GM12878 (cell line): ENCODE measurements at regions of chr4 and their contacts with region 1.

Region 1: GRCh38 chr4:48002267-48002666 is 14.2 kb downstream of the CNGA1 start:
- DNase-seq: no peak
- ATAC-seq: no peak
- H3K4me3 ChIP-seq: no peak overlapping the region
- H3K27ac ChIP-seq: no peak overlapping the region
- H3K4me1 ChIP-seq: no peaks in the 10 kb centered on the region
- H3K27me3 ChIP-seq: no peaks in the 10 kb centered on the region
- CTCF ChIP-seq: no peak
- EP300 ChIP-seq: no peak
- POLR2A ChIP-seq: no peak
- RAD21 ChIP-seq: no peak

Region 2: GRCh38 chr4:47674144-47674543 is 328.1 kb before region 1 on chr4:
- CTCF ChIA-PET with region 1: no interaction called
- POLR2A ChIA-PET with region 1: no interaction called
- RAD21 ChIA-PET with region 1: no interaction called
- SMC1A ChIA-PET with region 1: no interaction called
- in situ Hi-C with region 1: no loop called
- intact Hi-C with region 1: no loop called
- DNase-seq: no peak
- ATAC-seq: no peak
- H3K4me3 ChIP-seq: no peak overlapping the region
- H3K27ac ChIP-seq: no peak overlapping the region
- H3K4me1 ChIP-seq: no peaks in the 10 kb centered on the region
- H3K27me3 ChIP-seq: peaks cover 0 to 3% of the 10 kb centered on the region in 2 experiments; a peak in 2 of 4 replicates
- CTCF ChIP-seq: no peak
- EP300 ChIP-seq: no peak
- POLR2A ChIP-seq: no peak
- RAD21 ChIP-seq: no peak

Region 3: GRCh38 chr4:47891928-47892327 is 110.3 kb before region 1 on chr4:
- CTCF ChIA-PET with region 1: no interaction called
- POLR2A ChIA-PET with region 1: no interaction called
- RAD21 ChIA-PET with region 1: no interaction called
- SMC1A ChIA-PET with region 1: no interaction called
- in situ Hi-C with region 1: no loop called
- intact Hi-C with region 1: no loop called
- DNase-seq: no peak
- ATAC-seq: no peak
- H3K4me3 ChIP-seq: no peak overlapping the region
- H3K27ac ChIP-seq: no peak overlapping the region
- H3K4me1 ChIP-seq: no peaks in the 10 kb centered on the region
- H3K27me3 ChIP-seq: no peaks in the 10 kb centered on the region
- CTCF ChIP-seq: no peak
- EP300 ChIP-seq: no peak
- POLR2A ChIP-seq: no peak
- RAD21 ChIP-seq: no peak

Region 4: DNA sequence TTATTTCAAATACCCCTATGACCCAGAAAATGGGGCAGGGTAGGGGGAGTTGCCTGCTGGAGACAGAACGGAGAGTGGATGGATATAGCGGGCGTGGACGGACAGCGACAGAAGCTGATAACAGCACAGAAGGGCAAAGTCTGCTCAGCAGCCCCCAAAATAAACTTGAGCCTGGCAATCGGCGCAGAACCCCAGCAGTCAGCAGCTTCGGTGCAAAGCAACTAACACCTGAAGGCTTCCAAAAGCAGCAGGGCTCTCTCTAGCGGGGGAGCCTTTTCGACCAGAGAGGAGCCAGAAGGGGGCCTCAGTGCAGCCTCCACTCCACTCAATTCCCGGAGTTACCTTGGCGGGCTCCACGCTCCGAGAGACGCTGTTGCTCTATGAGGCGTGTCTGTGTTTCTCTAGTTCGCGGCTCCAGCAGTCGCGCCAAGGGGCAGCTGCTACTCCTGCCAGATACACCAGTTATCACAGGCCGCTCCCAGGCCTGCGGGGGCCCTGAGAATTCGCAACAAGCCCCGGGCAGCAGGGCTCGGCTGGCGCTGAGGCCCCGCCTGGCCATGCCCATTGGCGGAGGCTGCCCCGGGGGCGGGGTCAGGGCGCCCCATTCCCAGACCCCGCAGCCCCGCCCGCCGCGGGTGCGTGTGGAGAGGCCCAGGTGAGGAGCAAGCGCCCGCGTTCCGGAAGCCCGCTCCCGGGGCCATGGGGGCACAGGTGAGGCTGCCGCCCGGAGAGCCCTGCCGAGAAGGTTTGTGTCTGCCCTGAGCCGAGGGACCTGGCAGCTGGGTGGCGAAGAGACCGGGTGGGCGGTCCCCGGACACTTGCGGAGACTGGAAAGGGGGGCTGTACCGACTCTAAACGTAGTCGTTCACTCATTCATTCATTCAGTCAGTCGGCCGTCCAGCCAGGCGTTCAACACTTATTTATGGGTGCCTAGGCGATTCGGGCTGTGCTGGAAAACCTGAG is 14.2 kb after region 1 on chr4 and contains the starts of genes CNGA1 and NIPAL1:
- CTCF ChIA-PET with region 1: interaction called, 26 read pairs
- POLR2A ChIA-PET with region 1: no interaction called
- RAD21 ChIA-PET with region 1: interaction called, 3 read pairs
- SMC1A ChIA-PET with region 1: interaction called, 4 read pairs
- in situ Hi-C with region 1: no loop called
- intact Hi-C with region 1: no loop called
- DNase-seq: no peak
- ATAC-seq: peak; percentile 95
- H3K4me3 ChIP-seq: peak within 1 kb of the TSS; percentile 89
- H3K27ac ChIP-seq: peak within 1 kb of the TSS; percentile 30; the same call in 1 of the 2 replicates
- H3K4me1 ChIP-seq: no peaks in the 10 kb centered on the region
- H3K27me3 ChIP-seq: no peaks in the 10 kb centered on the region; a peak in 1 of 4 replicates
- CTCF ChIP-seq: peak; percentile 41 to 52 (median 48); a peak in 5 of 6 replicates
- EP300 ChIP-seq: no peak
- POLR2A ChIP-seq: peak; percentile 63
- RAD21 ChIP-seq: peak; percentile 58
- polyA plus RNA-seq, gene CNGA1: 7.9 to 8.9 TPM
- polyA plus RNA-seq, gene NIPAL1: 1.1 to 2.0 TPM

Region 5: GRCh38 chr4:48033825-48034413 is 31.7 kb after region 1 on chr4:
- CTCF ChIA-PET with region 1: interaction called, 10 read pairs
- POLR2A ChIA-PET with region 1: no interaction called
- RAD21 ChIA-PET with region 1: interaction called, 5 read pairs
- SMC1A ChIA-PET with region 1: interaction called, 18 read pairs
- in situ Hi-C with region 1: no loop called
- intact Hi-C with region 1: no loop called
- DNase-seq: no peak
- ATAC-seq: peak; percentile 74
- H3K4me3 ChIP-seq: no peak overlapping the region
- H3K27ac ChIP-seq: peak overlapping the region; percentile 20; the same call in 1 of the 2 replicates
- H3K4me1 ChIP-seq: peaks cover 48% of the 10 kb centered on the region
- H3K27me3 ChIP-seq: no peaks in the 10 kb centered on the region
- CTCF ChIP-seq: peak; percentile 45 to 63 (median 60)
- EP300 ChIP-seq: no peak
- POLR2A ChIP-seq: no peak
- RAD21 ChIP-seq: peak; percentile 56

Region 6: DNA sequence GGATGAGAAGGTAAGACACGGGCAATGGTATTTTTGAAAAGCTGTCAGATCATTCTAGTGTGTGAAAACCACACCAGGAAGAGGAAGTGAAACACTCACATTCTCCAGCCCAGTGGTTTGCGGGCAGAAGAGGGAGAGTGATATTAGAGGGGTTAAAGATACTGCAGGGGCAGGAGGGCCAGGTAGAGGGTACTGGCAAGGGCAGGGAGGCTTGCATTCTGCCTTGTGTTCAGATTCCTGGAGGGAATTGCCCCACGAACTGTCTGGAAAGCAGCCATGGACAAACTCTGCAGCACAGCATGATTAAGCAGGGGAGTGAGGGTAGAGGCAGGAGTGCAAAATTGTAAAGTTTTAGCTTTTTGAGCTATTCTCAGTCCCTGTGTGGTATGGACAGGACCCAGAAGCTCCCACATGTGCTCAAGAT is 45.2 kb after region 1 on chr4:
- CTCF ChIA-PET with region 1: interaction called, 7 read pairs
- POLR2A ChIA-PET with region 1: interaction called, 6 read pairs
- RAD21 ChIA-PET with region 1: interaction called, 13 read pairs
- SMC1A ChIA-PET with region 1: interaction called, 4 read pairs
- in situ Hi-C with region 1: no loop called
- intact Hi-C with region 1: no loop called
- DNase-seq: peak; percentile 84
- ATAC-seq: peak; percentile 95
- H3K4me3 ChIP-seq: peak overlapping the region; percentile 18; the same call in 1 of the 2 replicates
- H3K27ac ChIP-seq: peak overlapping the region; percentile 71
- H3K4me1 ChIP-seq: peaks cover 72% of the 10 kb centered on the region
- H3K27me3 ChIP-seq: no peaks in the 10 kb centered on the region; a peak in 1 of 4 replicates
- CTCF ChIP-seq: no peak
- EP300 ChIP-seq: peak; percentile 94 to 98
- POLR2A ChIP-seq: no peak
- RAD21 ChIP-seq: peak; percentile 36; the same call in 1 of the 2 replicates

Region 7: GRCh38 chr4:48079972-48080391 is 77.7 kb after region 1 on chr4:
- CTCF ChIA-PET with region 1: interaction called, 129 read pairs
- POLR2A ChIA-PET with region 1: no interaction called
- RAD21 ChIA-PET with region 1: interaction called, 75 read pairs
- SMC1A ChIA-PET with region 1: interaction called, 74 read pairs
- in situ Hi-C with region 1: loop called (anchors 5 kb)
- intact Hi-C with region 1: no loop called
- DNase-seq: no peak
- ATAC-seq: no peak
- H3K4me3 ChIP-seq: no peak overlapping the region
- H3K27ac ChIP-seq: no peak overlapping the region
- H3K4me1 ChIP-seq: no peaks in the 10 kb centered on the region
- H3K27me3 ChIP-seq: no peaks in the 10 kb centered on the region
- CTCF ChIP-seq: no peak
- EP300 ChIP-seq: no peak
- POLR2A ChIP-seq: no peak
- RAD21 ChIP-seq: no peak

Region 8: GRCh38 chr4:48093949-48094550 is 91.8 kb after region 1 on chr4:
- CTCF ChIA-PET with region 1: interaction called, 129 read pairs
- POLR2A ChIA-PET with region 1: no interaction called
- RAD21 ChIA-PET with region 1: interaction called, 17 read pairs
- SMC1A ChIA-PET with region 1: interaction called, 74 read pairs
- in situ Hi-C with region 1: no loop called
- intact Hi-C with region 1: no loop called
- DNase-seq: no peak
- ATAC-seq: no peak
- H3K4me3 ChIP-seq: no peak overlapping the region
- H3K27ac ChIP-seq: no peak overlapping the region
- H3K4me1 ChIP-seq: no peaks in the 10 kb centered on the region
- H3K27me3 ChIP-seq: no peaks in the 10 kb centered on the region
- CTCF ChIP-seq: no peak
- EP300 ChIP-seq: no peak
- POLR2A ChIP-seq: no peak
- RAD21 ChIP-seq: no peak

Region 9: GRCh38 chr4:48109413-48110263 is 107.4 kb after region 1 on chr4:
- CTCF ChIA-PET with region 1: interaction called, 28 read pairs
- POLR2A ChIA-PET with region 1: no interaction called
- RAD21 ChIA-PET with region 1: interaction called, 5 read pairs
- SMC1A ChIA-PET with region 1: interaction called, 7 read pairs
- in situ Hi-C with region 1: no loop called
- intact Hi-C with region 1: loop called (anchors 5 kb)
- DNase-seq: no peak
- ATAC-seq: peak; percentile 90
- H3K4me3 ChIP-seq: no peak overlapping the region
- H3K27ac ChIP-seq: no peak overlapping the region
- H3K4me1 ChIP-seq: no peaks in the 10 kb centered on the region
- H3K27me3 ChIP-seq: no peaks in the 10 kb centered on the region
- CTCF ChIP-seq: peak; percentile 57 to 64 (median 60)
- EP300 ChIP-seq: no peak
- POLR2A ChIP-seq: no peak
- RAD21 ChIP-seq: peak; percentile 74